Caco-2 (cell line): ENCODE measurements at regions of chr10 and their contacts with region 1.

Region 1: DNA sequence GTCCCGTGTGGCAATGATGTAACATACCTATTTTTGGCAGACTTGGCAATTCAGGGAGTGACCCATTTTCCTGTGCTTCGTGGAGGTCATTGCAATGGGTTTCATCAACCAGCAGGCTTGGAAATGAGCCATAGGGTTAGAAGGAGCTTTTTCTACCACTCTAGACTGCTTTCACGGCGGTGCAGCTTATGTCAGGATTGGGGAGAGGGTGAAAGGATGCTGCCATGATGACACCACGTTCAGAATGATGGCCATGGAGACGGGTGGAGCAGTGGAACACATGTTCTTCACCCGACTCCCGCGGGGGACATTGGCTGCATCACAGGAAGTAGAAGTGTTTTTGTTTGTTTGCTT is 220.2 kb downstream of the EMX2 start:
- DNase-seq: no peak
- H3K4me3 ChIP-seq: no peak overlapping the region
- H3K4me3 Mint-ChIP-seq: no peak overlapping the region
- H3K27ac Mint-ChIP-seq: no peak overlapping the region
- H3K4me1 ChIP-seq: no peaks in the 10 kb centered on the region
- H3K4me1 Mint-ChIP-seq: no peaks in the 10 kb centered on the region
- H3K27me3 ChIP-seq: no peaks in the 10 kb centered on the region; the same call in 1 of the 2 replicates
- H3K27me3 Mint-ChIP-seq: peaks cover 14% of the 10 kb centered on the region
- CTCF ChIP-seq: no peak

Region 2: GRCh38 chr10:117736684-117737083 is 26.1 kb before region 1 on chr10:
- CTCF ChIA-PET with region 1: no interaction called
- POLR2A ChIA-PET with region 1: no interaction called
- intact Hi-C with region 1: loop called (anchors 1 kb)
- DNase-seq: no peak
- H3K4me3 ChIP-seq: no peak overlapping the region
- H3K4me3 Mint-ChIP-seq: no peak overlapping the region
- H3K27ac Mint-ChIP-seq: no peak overlapping the region
- H3K4me1 ChIP-seq: no peaks in the 10 kb centered on the region
- H3K4me1 Mint-ChIP-seq: no peaks in the 10 kb centered on the region
- H3K27me3 ChIP-seq: no peaks in the 10 kb centered on the region
- H3K27me3 Mint-ChIP-seq: peaks cover 2% of the 10 kb centered on the region
- CTCF ChIP-seq: no peak